ENCODE measurements at regions of chr6 and their contacts with region 1.

Region 1: DNA sequence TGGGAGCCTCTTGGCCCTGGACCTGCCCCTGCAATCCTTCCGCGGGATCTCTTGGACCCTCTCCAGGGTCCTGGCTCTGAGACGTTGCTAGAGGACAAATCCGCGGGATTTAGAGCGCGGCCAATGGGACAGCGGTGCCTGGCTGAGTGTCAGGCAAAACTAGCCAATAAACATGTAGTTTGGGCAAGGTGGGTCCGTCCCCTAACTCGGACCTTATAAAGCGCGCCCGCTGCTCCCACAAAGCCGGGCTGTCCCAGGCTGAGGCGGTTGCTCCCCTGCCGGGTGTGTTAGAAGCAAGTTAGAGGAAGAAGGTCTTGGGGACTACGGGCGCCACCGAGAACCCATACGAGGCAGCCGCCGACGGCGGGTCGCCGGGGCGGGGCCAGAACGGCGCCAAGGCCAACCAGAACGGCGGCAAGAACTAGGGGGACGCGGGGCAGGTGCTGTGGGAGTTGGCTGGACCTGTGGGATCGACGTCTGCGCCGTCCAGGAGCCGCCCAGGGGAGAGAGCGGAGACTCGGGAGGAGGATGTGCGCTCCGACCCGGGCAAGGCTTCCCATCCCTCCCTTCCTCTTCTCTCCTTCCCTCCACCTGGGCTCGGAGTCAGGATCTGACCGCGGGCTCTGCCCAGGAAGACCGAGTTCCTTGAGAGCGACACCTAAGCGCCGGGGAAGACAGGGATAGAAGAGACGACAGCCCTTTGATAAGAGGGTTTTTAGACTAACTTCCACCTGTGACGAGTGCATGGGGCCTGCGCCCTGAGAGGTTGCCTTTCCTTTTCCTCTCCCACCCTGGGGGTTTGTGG is 6.5 kb upstream of the TMEM14A start:
- DNase-seq: peak; percentile 90 to 92 (median 91)
- H3K4me3 ChIP-seq: peak overlapping the region; percentile 74 to 90 (median 80)
- H3K27ac ChIP-seq: peak overlapping the region in 1 of 2 experiments; percentile 44
- H3K4me1 ChIP-seq: peaks cover 5 to 25% (median 16%) of the 10 kb centered on the region in 4 experiments
- H3K27me3 ChIP-seq: no peaks in the 10 kb centered on the region

Region 2: GRCh38 chr6:52389626-52390360 is 274.6 kb before region 1 on chr6:
- CTCF ChIA-PET with region 1: interaction called, 13 read pairs
- POLR2A ChIA-PET with region 1: no interaction called
- DNase-seq: peak; percentile 52 to 79 (median 70)
- H3K4me3 ChIP-seq: peak overlapping the region in 5 of 7 experiments; percentile 30 to 59 (median 46)
- H3K27ac ChIP-seq: peak overlapping the region; percentile 70 to 81
- H3K4me1 ChIP-seq: peaks cover 13 to 35% (median 27%) of the 10 kb centered on the region in 4 experiments
- H3K27me3 ChIP-seq: no peaks in the 10 kb centered on the region

Region 3: GRCh38 chr6:52407467-52407866 is 256.9 kb before region 1 on chr6:
- CTCF ChIA-PET with region 1: interaction called, 44 read pairs
- POLR2A ChIA-PET with region 1: no interaction called
- DNase-seq: peak; percentile 72 to 89 (median 84)
- H3K4me3 ChIP-seq: no peak overlapping the region
- H3K27ac ChIP-seq: no peak overlapping the region
- H3K4me1 ChIP-seq: no peaks in the 10 kb centered on the region
- H3K27me3 ChIP-seq: no peaks in the 10 kb centered on the region

Region 4: GRCh38 chr6:52598123-52598823 is 66.1 kb before region 1 on chr6:
- CTCF ChIA-PET with region 1: interaction called, 10 read pairs
- POLR2A ChIA-PET with region 1: no interaction called
- DNase-seq: peak; percentile 80 to 89 (median 86)
- H3K4me3 ChIP-seq: no peak overlapping the region
- H3K27ac ChIP-seq: no peak overlapping the region
- H3K4me1 ChIP-seq: peaks cover 0 to 14% (median 7%) of the 10 kb centered on the region in 4 experiments
- H3K27me3 ChIP-seq: no peaks in the 10 kb centered on the region

Region 5: DNA sequence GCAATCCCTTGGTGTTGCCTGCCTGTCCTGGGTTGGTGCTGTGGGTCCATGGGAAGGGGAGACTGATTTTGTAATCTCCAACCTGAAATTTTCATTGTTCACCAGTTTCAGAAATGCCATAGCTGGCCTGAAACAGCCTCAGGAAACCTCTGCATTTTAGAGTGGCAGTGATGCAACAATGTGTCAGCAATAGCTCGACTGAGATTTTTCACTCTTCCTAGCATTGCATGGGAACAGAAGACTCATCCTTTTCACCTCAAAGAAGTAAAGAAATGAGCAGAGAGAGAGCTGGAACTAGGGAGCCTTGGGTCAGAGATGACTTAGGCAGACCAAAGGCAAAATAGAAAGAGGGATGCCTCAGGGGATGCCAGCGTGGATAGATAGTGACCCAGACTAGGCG is 17.2 kb before region 1 on chr6:
- CTCF ChIA-PET with region 1: interaction called, 80 read pairs
- POLR2A ChIA-PET with region 1: no interaction called
- DNase-seq: no peak
- H3K4me3 ChIP-seq: no peak overlapping the region
- H3K27ac ChIP-seq: no peak overlapping the region
- H3K4me1 ChIP-seq: peaks cover 2 to 61% (median 6%) of the 10 kb centered on the region in 4 experiments
- H3K27me3 ChIP-seq: no peaks in the 10 kb centered on the region

Measured in common myeloid progenitor, CD34-positive (primary cell).